Right ventricle myocardium superior (tissue), 1 donor: ENCODE measurements at regions of chr11 and their contacts with region 1.

Region 1: GRCh38 chr11:1917671-1918516 is 1.6 kb upstream of the TNNT3 start:
- DNase-seq: peak; percentile 79
- ATAC-seq: peak; percentile 74

Region 2: GRCh38 chr11:1341928-1342524 is 575.9 kb before region 1 on chr11:
- intact Hi-C with region 1: no loop called
- DNase-seq: no peak
- ATAC-seq: peak; percentile 69

Region 3: DNA sequence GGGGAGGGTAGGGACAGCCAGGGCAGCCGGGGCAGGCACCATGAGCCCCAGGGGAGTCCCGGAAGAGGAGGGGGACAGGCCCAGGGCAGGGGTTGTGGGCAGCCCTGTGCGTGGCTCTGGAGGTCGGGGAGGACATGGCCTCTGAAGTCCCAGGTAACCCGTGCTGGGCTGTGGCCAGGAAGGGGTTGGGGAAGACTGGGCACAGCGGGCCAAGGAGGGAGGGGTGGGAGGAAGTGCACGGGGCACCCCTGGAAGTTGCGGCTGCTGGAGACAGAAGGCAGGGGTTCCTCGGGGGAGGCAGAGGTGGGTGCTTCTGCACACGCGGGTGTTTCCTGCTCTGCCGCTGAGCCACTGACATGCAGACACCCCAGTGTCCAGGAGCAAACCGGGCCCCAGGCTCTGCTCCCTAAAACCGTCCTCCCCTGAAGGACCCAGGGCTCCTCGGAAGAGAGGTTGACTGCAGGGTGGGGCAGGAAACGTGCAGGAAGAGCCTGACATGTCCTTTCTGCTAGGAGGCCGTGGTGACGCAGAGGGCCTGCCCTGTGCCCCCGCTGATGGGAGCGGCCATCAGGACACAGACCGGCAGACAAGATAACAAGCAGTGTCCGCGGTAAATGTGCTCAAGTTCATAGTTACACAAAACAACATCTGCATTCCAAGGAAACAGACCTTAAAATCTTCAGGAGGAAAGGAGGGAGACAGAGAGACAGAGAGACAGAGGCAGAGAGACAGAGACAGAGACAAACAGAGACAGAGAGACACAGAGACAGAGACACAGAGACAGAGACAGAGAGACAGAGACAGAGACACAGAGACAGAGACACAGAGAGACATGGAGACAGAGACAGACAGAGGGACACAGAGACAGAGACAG is 73.4 kb before region 1 on chr11:
- intact Hi-C with region 1: no loop called
- DNase-seq: peak; percentile 83
- ATAC-seq: peak; percentile 23

Region 4: DNA sequence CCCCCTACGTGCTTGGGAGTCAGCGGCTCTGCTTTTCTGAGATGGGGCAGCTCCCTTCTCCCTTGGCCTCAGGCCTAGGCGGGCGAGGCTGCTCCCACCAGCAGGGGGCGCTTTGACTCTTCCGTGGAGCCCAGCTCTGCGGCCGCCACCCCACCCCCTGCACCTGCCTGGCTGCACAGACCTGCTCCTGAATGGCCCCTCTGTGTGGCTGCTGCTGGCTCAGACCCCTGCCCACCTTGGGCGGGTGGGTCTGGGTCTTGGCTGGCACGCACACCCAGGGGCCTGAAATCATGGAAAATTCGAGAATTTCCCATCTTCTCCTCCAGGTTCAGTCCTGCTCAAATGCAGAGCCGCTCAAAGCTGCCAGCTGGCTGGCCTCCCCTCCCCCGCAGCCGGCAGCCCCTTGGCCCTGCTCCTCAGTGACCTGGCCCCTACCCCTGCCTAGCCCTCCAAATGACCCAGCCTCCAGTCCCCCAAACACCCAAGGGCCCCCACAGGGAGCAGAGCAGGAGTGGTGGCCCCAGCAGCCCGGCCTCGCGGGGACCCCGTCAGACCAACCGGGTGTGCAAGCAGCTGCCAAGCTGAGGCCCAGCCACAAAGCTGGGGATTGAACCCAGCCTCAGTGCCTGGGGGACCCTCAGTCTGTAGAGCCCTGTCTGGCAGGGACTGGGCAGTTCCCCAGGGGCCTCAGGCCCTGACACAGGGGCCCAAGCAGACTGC is 35.2 kb before region 1 on chr11:
- intact Hi-C with region 1: loop called (anchors 5 kb)
- DNase-seq: peak; percentile 92
- ATAC-seq: peak; percentile 79

Region 5: DNA sequence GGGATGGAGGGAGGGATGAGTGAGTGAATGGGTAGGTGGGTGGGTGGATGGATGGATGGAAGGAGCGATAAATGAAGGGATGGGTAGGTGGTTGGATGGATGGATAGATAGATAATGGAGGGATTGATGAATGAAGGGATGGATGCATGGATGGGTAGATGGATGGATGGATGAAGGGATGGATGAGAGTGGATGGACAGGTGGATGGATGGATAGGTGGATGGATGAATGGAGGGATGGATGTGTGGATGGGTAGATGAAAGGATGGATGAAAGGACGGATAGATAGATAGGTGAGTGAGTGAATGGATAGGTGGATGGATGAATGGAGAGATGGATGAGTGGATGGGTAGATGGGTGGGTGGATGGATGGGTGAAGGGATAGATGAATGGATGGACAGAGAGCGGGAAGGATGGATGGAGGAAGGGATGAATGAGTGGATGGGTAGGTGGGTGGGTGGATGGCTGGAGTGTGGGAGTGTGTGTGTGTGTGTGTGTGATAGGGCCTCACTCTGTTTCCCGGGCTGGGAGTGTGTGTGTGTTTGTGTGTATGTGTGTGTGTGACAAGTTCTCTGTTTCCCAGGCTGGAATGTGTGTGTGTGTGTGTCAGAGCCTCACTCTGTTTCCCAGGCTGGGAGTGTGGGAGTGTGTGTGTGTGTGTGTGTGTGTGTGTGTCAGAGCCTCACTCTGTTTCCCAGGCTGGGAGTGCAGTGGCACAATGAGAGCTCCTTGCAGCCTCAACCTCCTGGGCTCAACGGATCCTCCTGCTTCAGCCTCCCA is 24.1 kb before region 1 on chr11:
- intact Hi-C with region 1: loop called (anchors 1 kb)
- DNase-seq: no peak
- ATAC-seq: no peak

Region 6: GRCh38 chr11:1939006-1939625 is 21.2 kb after region 1 on chr11:
- intact Hi-C with region 1: loop called (anchors 1 kb)
- DNase-seq: no peak
- ATAC-seq: no peak